ENCODE measurements at regions of chr2 and their contacts with region 1.

Region 1: GRCh38 chr2:12702305-12703121 is 14.2 kb upstream of the TRIB2 start:
- DNase-seq: peak; percentile 90
- ATAC-seq: peak; percentile 72
- H3K4me3 ChIP-seq: no peak overlapping the region
- H3K27ac ChIP-seq: peak overlapping the region; percentile 80
- H3K4me1 ChIP-seq: peaks cover 11% of the 10 kb centered on the region
- H3K27me3 ChIP-seq: no peaks in the 10 kb centered on the region
- CTCF ChIP-seq: no peak
- POLR2A ChIP-seq: no peak; the same call in 1 of the 2 replicates
- RAD21 ChIP-seq: 0 out of 2 replicates have a peak, but pooled peaks have one; percentile 2

Region 2: GRCh38 chr2:12619975-12620374 is 82.5 kb before region 1 on chr2:
- CTCF ChIA-PET with region 1: no interaction called
- POLR2A ChIA-PET with region 1: no interaction called
- dilution Hi-C with region 1: no loop called
- in situ Hi-C with region 1: no loop called
- intact Hi-C with region 1: loop called (anchors 5 kb)
- DNase-seq: peak; percentile 92
- ATAC-seq: peak; percentile 77
- H3K4me3 ChIP-seq: no peak overlapping the region
- H3K27ac ChIP-seq: no peak overlapping the region
- H3K4me1 ChIP-seq: peaks cover 5% of the 10 kb centered on the region
- H3K27me3 ChIP-seq: no peaks in the 10 kb centered on the region
- CTCF ChIP-seq: no peak
- POLR2A ChIP-seq: no peak
- RAD21 ChIP-seq: no peak

Measured in IMR-90 (cell line).